Breast epithelium (tissue), 4 donors: ENCODE measurements at regions of chr10 and their contacts with region 1.

Region 1: DNA sequence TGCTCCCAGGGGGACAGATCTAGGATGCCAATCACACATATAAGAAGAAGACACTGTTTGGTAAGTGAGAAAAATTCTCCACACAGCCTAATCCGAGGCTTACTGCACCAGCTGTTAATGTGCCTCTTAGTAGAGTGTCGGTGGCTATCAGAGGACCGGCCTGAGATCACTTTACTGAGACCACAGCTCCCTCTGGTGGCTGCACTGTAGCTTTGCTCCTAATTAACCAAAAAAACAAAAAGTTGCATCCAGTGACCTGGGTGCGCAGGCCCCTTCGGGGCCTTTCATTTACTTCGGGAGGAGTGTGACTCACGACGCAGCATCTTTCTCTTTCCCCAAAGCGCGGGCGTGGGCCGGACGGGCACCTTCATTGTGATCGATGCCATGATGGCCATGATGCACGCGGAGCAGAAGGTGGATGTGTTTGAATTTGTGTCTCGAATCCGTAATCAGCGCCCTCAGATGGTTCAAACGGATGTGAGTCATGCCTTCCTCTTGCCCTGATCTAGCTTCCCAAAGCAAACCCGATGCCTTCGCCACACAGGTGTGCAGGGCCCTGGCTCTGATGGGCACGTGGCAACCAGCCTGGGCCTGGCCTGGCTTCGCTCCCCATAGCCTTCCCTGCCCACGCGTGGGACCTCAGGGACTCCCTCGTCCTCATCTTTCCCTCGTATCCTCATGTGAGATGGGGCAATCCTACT is 56.7 kb downstream of the MKI67 start:
- DNase-seq: peak in 1 of 2 donors; percentile 77
- H3K4me3 ChIP-seq: no peak overlapping the region
- H3K27ac ChIP-seq: peak overlapping the region in 1 of 2 donors; percentile 5
- H3K4me1 ChIP-seq: peaks cover 5 to 6% of the 10 kb centered on the region in 2 donors
- H3K27me3 ChIP-seq: no peaks in the 10 kb centered on the region
- CTCF ChIP-seq: peak; percentile 79 to 89 (median 82)
- POLR2A ChIP-seq: no peak

Region 2: DNA sequence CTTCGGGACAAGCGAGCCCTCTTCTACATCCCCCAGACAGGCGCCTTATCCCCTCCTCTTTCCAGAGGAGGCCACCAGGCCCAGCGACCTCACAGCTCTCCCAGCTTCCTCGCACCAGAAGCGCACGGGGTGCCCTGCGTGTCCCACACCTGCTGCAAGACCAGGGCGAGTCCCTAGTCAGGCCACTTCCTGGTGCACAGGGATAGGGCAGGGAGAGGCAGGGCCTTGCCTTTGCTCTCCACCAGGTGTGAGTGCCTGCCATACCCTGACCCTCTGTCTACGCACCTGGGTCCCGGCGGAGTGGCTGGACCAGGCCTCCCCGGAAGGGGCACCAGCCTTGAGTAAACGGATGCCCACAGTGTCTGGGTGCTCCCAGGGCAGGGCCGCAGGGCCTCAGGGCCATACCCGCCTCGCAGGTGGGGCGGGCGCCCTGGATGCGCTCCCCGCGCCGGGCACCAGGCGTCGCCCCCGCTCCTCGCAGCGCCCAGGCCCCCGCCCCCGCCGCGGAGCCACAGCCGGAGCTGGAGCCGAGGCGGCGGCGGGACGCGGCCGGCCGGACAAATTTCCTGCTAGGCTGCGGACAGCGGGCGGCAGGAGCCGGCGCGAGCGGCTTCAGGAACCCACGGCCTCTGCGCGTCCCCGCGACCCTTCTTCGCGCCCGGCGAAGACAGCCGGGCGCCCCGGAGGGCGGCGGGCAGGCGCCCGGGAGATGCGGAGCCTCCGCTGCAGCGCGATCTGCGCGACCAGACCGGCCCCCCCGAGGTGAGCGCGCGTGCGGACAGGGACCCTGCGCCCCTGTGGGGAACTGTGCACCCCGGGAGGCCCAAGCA is 162.7 kb before region 1 on chr10 and contains the start of gene PTPRE:
- intact Hi-C with region 1: loop called (anchors 10 kb)
- DNase-seq: peak; percentile 61 to 63
- H3K4me3 ChIP-seq: peak within 1 kb of the TSS; percentile 61 to 84 (median 73)
- H3K27ac ChIP-seq: peak within 1 kb of the TSS; percentile 83 to 93
- H3K4me1 ChIP-seq: peaks cover 5 to 9% of the 10 kb centered on the region in 2 donors
- H3K27me3 ChIP-seq: no peaks in the 10 kb centered on the region
- CTCF ChIP-seq: peak; percentile 46 to 97 (median 79)
- POLR2A ChIP-seq: no peak
- total RNA-seq, gene PTPRE: 11.8 to 42.9 (median 25.6) TPM

Region 3: DNA sequence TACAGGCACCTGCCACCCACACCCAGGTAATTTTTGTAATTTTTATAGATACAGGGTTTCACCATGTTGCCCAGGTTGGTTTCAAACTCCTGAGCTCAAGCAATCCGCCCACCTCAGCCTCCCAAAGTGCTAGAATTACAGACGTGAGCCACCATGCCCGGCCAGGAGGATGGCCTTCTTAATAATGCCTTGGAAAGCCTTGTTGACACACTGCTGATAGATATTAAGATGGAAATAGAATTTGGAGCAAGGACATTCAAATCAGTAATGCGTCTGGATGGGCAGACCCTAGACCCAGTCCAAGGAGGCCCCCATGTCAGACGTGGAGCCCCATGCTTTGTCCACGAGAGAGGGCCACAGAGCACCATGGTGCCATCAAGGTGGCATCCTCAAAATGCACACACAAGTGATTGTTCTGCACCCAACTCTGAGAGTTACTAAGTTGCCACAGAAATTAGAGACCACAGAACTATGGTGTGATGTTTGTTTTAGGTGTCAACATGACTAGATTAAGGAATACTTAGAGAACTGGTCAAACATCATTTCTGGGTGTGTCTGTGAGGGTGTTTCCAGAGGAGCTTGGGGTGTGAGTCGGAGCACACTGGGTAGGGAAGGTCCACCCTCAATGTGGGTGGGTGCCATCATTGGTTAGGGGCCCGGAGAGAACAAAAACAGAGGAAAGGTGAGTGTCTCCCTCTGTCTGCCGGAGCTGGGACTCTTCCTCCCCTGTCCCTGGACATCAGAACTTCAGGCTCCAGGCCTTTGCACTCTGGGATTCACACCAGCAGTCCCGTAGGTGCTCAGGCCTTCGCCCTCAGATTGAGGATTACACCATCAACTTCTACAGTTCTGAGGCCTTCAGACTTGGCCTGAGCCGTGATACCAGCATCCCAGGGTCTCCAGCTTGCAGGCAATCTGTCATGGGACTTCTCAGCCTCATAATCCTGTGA is 1860.1 kb after region 1 on chr10:
- intact Hi-C with region 1: loop called (anchors 5 kb)
- DNase-seq: peak in 1 of 2 donors; percentile 33
- H3K4me3 ChIP-seq: no peak overlapping the region
- H3K27ac ChIP-seq: no peak overlapping the region
- H3K4me1 ChIP-seq: no peaks in the 10 kb centered on the region
- H3K27me3 ChIP-seq: no peaks in the 10 kb centered on the region
- CTCF ChIP-seq: no peak
- POLR2A ChIP-seq: no peak